ENCODE measurements at regions of chr22 and their contacts with region 1.

Region 1: DNA sequence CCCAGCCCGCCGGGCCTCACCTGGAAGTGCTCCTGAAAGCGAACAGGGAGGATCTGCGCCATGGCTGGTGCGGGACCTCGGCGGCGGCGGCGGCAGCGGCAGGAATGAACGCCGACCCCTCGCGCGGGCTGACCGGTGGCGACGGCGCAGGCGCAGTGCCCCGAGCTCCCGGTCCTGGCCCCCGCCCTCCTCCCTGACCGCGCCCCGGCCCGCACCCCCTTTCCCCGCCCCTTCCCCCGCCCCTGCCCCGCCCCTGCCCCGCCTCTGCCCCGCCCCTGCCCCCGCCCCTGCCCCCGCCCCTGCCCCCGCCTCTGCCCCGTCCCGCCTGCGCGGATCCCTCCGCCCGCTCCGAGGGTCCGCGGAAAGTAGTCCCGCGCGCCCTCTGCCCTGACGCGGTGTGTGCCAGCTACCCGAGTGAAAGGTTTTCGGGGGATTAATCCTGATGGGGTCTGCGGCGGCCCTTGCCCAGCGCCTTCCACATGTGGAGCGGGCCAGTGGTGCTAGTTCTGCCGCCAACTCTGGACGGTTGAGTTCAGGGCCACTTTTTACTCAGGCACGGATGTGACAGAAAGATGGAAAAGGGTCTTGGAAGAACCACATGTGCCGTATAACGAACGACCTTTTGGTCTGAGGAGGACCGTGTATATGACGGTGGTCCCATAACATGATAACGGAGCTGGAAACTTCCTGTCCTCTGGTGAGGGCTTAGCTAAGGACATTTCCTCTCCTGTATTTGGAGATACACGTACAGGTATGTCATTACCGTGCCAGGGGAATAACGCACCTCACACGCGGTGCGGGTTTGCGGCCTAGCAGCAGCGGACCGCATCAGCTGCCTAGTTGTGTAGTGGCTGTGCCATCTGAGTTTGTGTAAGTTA is at the start of gene CLTCL1:
- DNase-seq: peak; percentile 63
- H3K4me3 Mint-ChIP-seq: peak within 1 kb of the TSS; percentile 86
- H3K27ac Mint-ChIP-seq: peak within 1 kb of the TSS; percentile 76
- H3K4me1 Mint-ChIP-seq: peaks cover 12% of the 10 kb centered on the region
- H3K27me3 Mint-ChIP-seq: peaks cover 39% of the 10 kb centered on the region
- total RNA-seq, gene CLTCL1: 0.60 and 1.5 TPM in 2 replicates

Region 2: GRCh38 chr22:19122143-19122751 is 169.6 kb before region 1 on chr22 and contains the start of gene DGCR2:
- intact Hi-C with region 1: loop called (anchors 5 kb)
- DNase-seq: peak; percentile 89
- H3K4me3 Mint-ChIP-seq: peak within 1 kb of the TSS; percentile 83
- H3K27ac Mint-ChIP-seq: no peak within 1 kb of the TSS
- H3K4me1 Mint-ChIP-seq: peaks cover 27% of the 10 kb centered on the region
- H3K27me3 Mint-ChIP-seq: peaks cover 2% of the 10 kb centered on the region
- total RNA-seq, gene DGCR2: 20.8 and 22.5 TPM in 2 replicates

Region 3: GRCh38 chr22:19178656-19179496 is 112.9 kb before region 1 on chr22 and contains the start of gene SLC25A1:
- intact Hi-C with region 1: loop called (anchors 2 kb)
- DNase-seq: peak; percentile 82
- H3K4me3 Mint-ChIP-seq: peak within 1 kb of the TSS; percentile 79
- H3K27ac Mint-ChIP-seq: peak within 1 kb of the TSS; percentile 58
- H3K4me1 Mint-ChIP-seq: peaks cover 18% of the 10 kb centered on the region
- H3K27me3 Mint-ChIP-seq: no peaks in the 10 kb centered on the region
- total RNA-seq, gene SLC25A1: 52.0 and 53.1 TPM in 2 replicates

Region 4: DNA sequence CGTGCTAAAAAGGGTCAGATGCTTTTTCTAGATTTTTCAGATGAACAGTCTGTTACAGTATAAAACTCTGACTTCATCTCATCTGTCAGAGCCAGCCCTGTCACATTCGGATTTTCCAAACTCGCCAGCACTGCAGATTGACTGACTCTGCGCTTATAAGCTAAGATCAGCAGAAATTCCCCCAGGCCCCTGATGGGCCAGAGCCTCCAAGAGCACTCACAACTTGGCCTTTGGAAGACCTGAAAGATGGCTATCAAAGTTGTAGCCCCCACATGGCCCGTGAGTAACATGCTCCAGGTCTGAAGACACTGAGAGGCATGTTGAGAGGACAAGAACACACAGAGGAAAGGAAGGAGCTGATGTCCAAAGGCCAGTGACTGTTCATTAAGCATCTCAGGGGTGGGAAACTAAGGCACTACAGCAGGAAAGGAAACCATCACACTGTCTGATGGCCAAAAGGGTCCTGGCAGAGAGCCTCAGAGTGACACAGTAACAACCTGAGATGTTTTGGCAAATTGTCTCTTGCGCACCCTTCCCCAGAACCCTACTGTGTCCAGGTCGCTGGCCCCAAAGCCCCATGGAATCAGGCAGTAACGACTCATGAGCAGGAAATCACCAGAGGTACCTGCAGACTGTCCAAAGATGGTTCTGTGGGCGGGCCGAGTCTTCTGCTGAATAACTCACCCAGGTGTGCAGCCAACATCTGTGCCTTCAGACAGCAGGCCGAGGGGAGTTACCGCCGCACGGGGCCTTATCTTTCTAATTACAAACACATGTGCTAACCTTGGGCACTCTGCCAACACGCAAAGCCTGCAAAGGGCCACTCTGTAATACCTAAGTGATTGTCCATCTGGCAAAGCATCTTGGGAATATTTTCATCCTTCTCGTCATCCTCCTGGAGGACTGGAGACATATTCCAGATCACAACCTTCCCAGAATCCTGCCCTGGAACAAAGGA is 116.1 kb after region 1 on chr22:
- intact Hi-C with region 1: no loop called
- DNase-seq: no peak
- H3K4me3 Mint-ChIP-seq: no peak overlapping the region
- H3K27ac Mint-ChIP-seq: no peak overlapping the region
- H3K4me1 Mint-ChIP-seq: peaks cover 4% of the 10 kb centered on the region
- H3K27me3 Mint-ChIP-seq: no peaks in the 10 kb centered on the region

Region 5: GRCh38 chr22:19432133-19432851 is 140.5 kb after region 1 on chr22 and contains the start of gene MRPL40:
- intact Hi-C with region 1: loop called (anchors 5 kb)
- DNase-seq: peak; percentile 86
- H3K4me3 Mint-ChIP-seq: peak within 1 kb of the TSS; percentile 89
- H3K27ac Mint-ChIP-seq: peak within 1 kb of the TSS; percentile 92
- H3K4me1 Mint-ChIP-seq: peaks cover 35% of the 10 kb centered on the region
- H3K27me3 Mint-ChIP-seq: no peaks in the 10 kb centered on the region
- total RNA-seq, gene MRPL40: 32.2 and 34.8 TPM in 2 replicates

Region 6: GRCh38 chr22:19576460-19577421 is 284.9 kb after region 1 on chr22:
- intact Hi-C with region 1: no loop called
- DNase-seq: peak; percentile 63
- H3K4me3 Mint-ChIP-seq: peak overlapping the region; percentile 65
- H3K27ac Mint-ChIP-seq: peak overlapping the region; percentile 94
- H3K4me1 Mint-ChIP-seq: peaks cover 44% of the 10 kb centered on the region
- H3K27me3 Mint-ChIP-seq: no peaks in the 10 kb centered on the region

Region 7: DNA sequence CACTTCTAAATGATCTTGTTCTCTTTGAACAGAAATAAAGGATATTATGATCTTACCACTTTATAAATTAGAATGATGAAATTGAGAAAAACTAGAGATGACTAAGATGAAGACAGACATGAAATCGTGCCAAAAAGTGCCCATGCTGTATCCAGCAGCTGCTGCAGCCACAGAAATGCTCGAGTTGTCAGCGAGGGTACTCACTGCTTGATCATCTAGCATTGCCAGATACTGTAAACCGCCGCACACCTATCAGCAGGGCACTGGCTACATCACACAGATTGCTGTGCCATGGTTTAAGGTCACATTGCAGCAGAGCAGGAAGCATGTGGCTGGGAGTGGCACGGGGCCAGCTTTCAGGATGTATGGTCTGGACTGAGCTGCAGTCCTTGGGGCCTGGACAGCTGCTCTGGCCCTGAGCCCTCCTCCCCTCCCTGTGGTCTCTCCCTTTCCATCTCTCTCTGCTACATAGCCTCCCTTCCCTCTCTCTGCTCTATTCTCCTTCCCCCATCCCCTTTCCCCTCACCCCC is 371.5 kb after region 1 on chr22:
- intact Hi-C with region 1: no loop called
- DNase-seq: no peak
- H3K4me3 Mint-ChIP-seq: no peak overlapping the region
- H3K27ac Mint-ChIP-seq: no peak overlapping the region
- H3K4me1 Mint-ChIP-seq: no peaks in the 10 kb centered on the region
- H3K27me3 Mint-ChIP-seq: no peaks in the 10 kb centered on the region

Measured in activated T-helper 2 cell treated with anti-CD3 and anti-CD28 coated beads, Interferon-gamma antibody, Interleukin-2, Interleukin-4, amounts not matched to agents 10 μg/mL and 5 μg/mL and 100 μg/mL, durations not matched to agents 14 hours and 24 hours and 36 hours (primary cell).